Motor neuron (in vitro differentiated cells): ENCODE measurements at regions of chr2 and their contacts with region 1.

Region 1: GRCh38 chr2:72770879-72771461 is 54.9 kb downstream of the EXOC6B start:
- ATAC-seq: peak in 4 of 8 experiments; percentile 33 to 67 (median 64)
- H3K4me3 ChIP-seq: no peak overlapping the region
- H3K27ac ChIP-seq: no peak overlapping the region
- H3K4me1 ChIP-seq: no peaks in the 10 kb centered on the region

Region 2: GRCh38 chr2:72483346-72483745 is 287.6 kb before region 1 on chr2:
- in situ Hi-C with region 1: no loop called
- ATAC-seq: no peak
- H3K4me3 ChIP-seq: no peak overlapping the region
- H3K27ac ChIP-seq: no peak overlapping the region
- H3K4me1 ChIP-seq: no peaks in the 10 kb centered on the region

Region 3: GRCh38 chr2:72694715-72695496 is 76.1 kb before region 1 on chr2:
- in situ Hi-C with region 1: no loop called
- ATAC-seq: peak in 7 of 8 experiments; percentile 25 to 98 (median 91)
- H3K4me3 ChIP-seq: no peak overlapping the region
- H3K27ac ChIP-seq: no peak overlapping the region
- H3K4me1 ChIP-seq: peaks cover 15 to 17% of the 10 kb centered on the region in 2 donors

Region 4: GRCh38 chr2:72719416-72719815 is 51.6 kb before region 1 on chr2:
- in situ Hi-C with region 1: no loop called
- ATAC-seq: peak in 1 of 8 experiments; percentile 44
- H3K4me3 ChIP-seq: no peak overlapping the region
- H3K27ac ChIP-seq: no peak overlapping the region
- H3K4me1 ChIP-seq: no peaks in the 10 kb centered on the region

Region 5: GRCh38 chr2:72851321-72851720 is 80.4 kb after region 1 on chr2:
- in situ Hi-C with region 1: loop called in 5 of 9 experiments (anchors 5 to 25 kb)
- ATAC-seq: no peak
- H3K4me3 ChIP-seq: no peak overlapping the region
- H3K27ac ChIP-seq: no peak overlapping the region
- H3K4me1 ChIP-seq: no peaks in the 10 kb centered on the region

Region 6: GRCh38 chr2:72862239-72862988 is 91.4 kb after region 1 on chr2:
- in situ Hi-C with region 1: loop called in 4 of 9 experiments (anchors 10 to 25 kb)
- ATAC-seq: peak; percentile 98 to 100 (median 99)
- H3K4me3 ChIP-seq: peak overlapping the region in 2 of 5 donors; percentile 16 to 23
- H3K27ac ChIP-seq: no peak overlapping the region
- H3K4me1 ChIP-seq: no peaks in the 10 kb centered on the region

Region 7: DNA sequence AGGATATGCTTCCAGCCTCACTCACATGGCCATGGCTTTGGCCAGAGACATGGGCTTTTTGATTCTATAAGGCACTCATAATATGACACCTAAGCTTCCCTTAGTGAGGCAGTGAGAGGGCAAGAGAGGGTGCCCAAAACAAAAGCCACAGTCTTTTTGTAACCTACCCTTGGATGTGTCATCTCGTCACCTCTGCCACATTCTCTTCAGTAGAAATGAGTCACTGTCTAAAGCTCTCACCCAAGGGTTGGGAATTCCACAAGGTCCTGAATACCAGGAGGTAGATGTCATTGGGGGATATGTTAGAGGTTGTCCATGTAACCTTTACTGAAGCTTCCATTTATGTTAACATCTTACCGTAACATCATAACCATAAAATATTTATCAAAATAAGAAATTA is 723.1 kb after region 1 on chr2:
- in situ Hi-C with region 1: no loop called
- ATAC-seq: no peak
- H3K4me3 ChIP-seq: no peak overlapping the region
- H3K27ac ChIP-seq: no peak overlapping the region
- H3K4me1 ChIP-seq: no peaks in the 10 kb centered on the region